HEK293T (cell line): ENCODE measurements at regions of chr6 and their contacts with region 1.

Region 1: DNA sequence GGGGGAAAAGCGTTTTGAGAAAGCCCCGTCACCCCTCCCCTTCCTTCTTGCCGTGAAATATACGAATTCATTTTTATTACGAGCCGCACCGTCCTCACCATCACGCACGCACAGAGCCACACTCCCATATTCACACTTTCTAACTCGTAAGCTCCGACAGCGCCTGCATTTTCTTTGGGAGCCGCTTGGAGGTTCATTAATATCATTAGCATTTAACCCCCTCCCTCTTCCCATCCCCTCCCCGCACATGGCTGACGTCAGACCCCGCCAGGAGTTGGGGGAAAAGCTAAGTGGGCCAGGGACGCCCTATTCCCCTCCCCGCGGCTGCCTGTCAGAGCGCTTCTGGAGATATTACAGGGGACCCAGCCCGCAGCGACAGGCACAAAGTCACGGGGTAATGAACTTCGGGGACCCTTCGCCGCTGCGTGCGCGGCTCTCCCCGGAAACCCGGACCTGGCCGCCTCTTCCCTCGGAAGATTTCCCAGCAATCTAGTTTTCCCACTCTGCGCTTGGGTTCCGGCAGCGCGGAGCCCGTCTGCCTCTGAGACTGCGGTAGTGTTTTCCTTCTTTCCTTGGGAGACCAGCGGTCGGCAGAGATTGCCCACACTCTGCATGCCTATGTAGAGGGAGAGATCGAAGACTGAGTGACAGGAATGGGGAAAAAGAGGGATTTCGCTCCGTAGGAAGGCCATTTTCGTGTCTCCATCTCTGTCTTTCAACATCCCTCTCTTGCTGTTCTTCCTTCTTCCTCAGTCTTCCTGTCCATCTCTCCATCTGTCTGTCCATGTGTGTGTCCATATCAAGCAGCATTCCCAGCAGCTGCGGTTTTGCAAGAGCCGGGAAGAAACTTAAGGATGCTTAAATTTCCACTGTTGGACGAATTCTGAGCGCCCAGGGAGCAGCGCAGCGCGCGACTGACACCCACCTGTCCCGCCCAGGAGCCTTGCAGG is at the start of gene NR2E1:
- DNase-seq: peak; percentile 43

Region 2: GRCh38 chr6:107991061-107991460 is 174.9 kb before region 1 on chr6:
- CTCF ChIA-PET with region 1: no interaction called
- POLR2A ChIA-PET with region 1: no interaction called
- DNase-seq: no peak

Region 3: GRCh38 chr6:108133594-108134179 is 32.3 kb before region 1 on chr6:
- CTCF ChIA-PET with region 1: no interaction called
- POLR2A ChIA-PET with region 1: interaction called, 17 read pairs
- DNase-seq: peak; percentile 88

Region 4: DNA sequence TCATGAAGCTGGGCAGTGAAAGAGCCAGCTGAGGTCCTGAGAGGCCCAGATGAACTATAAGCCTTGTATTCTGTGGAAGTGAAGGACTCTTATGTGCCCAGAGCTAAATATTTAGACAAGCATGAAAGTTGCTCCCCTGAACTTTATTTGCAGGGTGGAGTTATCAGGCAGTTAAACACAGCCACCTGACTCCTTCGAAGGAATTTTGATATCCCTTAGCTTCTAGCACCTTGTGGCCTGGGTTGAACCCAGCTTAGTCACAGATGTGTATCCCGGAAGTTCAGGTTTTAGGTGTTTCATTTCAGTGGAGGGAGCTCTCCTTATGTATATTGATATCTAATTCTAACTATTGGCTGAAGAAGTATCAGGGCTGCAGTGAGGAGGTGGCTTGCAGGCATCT is 20.2 kb after region 1 on chr6:
- CTCF ChIA-PET with region 1: no interaction called
- POLR2A ChIA-PET with region 1: no interaction called
- DNase-seq: no peak